Caco-2 (cell line): ENCODE measurements at regions of chr2 and their contacts with region 1.

Region 1: GRCh38 chr2:204260162-204260877 is 285.0 kb upstream of the PARD3B start:
- DNase-seq: peak; percentile 71 to 75
- H3K4me3 ChIP-seq: no peak overlapping the region
- H3K4me3 Mint-ChIP-seq: no peak overlapping the region
- H3K27ac Mint-ChIP-seq: no peak overlapping the region
- H3K4me1 ChIP-seq: peaks cover 9% of the 10 kb centered on the region; the same call in 1 of the 2 replicates
- H3K4me1 Mint-ChIP-seq: peaks cover 26% of the 10 kb centered on the region
- H3K27me3 ChIP-seq: no peaks in the 10 kb centered on the region
- H3K27me3 Mint-ChIP-seq: no peaks in the 10 kb centered on the region
- CTCF ChIP-seq: peak; percentile 81 to 88

Region 2: GRCh38 chr2:204018717-204019116 is 241.6 kb before region 1 on chr2:
- CTCF ChIA-PET with region 1: no interaction called
- POLR2A ChIA-PET with region 1: no interaction called
- intact Hi-C with region 1: no loop called
- DNase-seq: no peak
- H3K4me3 ChIP-seq: no peak overlapping the region
- H3K4me3 Mint-ChIP-seq: no peak overlapping the region
- H3K27ac Mint-ChIP-seq: no peak overlapping the region
- H3K4me1 ChIP-seq: no peaks in the 10 kb centered on the region
- H3K4me1 Mint-ChIP-seq: no peaks in the 10 kb centered on the region
- H3K27me3 ChIP-seq: no peaks in the 10 kb centered on the region
- H3K27me3 Mint-ChIP-seq: peaks cover 9% of the 10 kb centered on the region
- CTCF ChIP-seq: no peak

Region 3: DNA sequence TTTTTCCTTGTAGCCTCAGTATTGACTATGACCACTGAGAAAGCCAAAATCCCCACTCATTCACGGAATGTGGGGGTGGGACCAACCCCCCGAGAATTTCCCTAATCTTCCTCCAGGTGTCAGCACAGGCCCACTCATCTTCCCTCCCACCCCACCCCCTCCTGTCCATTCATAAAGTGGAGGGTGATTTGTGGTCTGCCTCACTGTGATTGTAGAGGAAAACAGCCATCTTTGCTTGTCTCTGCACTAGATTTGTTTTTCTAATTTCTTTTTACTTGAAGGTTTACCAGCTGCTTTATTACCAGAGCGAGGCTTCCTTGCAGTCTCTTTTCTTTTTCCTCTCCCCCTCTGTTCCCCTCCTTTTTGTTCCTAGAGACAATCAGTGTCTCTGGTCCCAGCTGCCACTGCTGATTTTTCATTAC is 152.0 kb before region 1 on chr2:
- CTCF ChIA-PET with region 1: no interaction called
- POLR2A ChIA-PET with region 1: no interaction called
- intact Hi-C with region 1: loop called (anchors 2 kb)
- DNase-seq: peak; percentile 48 to 54
- H3K4me3 ChIP-seq: no peak overlapping the region
- H3K4me3 Mint-ChIP-seq: no peak overlapping the region
- H3K27ac Mint-ChIP-seq: no peak overlapping the region
- H3K4me1 ChIP-seq: no peaks in the 10 kb centered on the region
- H3K4me1 Mint-ChIP-seq: peaks cover 19% of the 10 kb centered on the region
- H3K27me3 ChIP-seq: no peaks in the 10 kb centered on the region; the same call in 1 of the 2 replicates
- H3K27me3 Mint-ChIP-seq: peaks cover 4% of the 10 kb centered on the region
- CTCF ChIP-seq: peak; percentile 78 to 80

Region 4: DNA sequence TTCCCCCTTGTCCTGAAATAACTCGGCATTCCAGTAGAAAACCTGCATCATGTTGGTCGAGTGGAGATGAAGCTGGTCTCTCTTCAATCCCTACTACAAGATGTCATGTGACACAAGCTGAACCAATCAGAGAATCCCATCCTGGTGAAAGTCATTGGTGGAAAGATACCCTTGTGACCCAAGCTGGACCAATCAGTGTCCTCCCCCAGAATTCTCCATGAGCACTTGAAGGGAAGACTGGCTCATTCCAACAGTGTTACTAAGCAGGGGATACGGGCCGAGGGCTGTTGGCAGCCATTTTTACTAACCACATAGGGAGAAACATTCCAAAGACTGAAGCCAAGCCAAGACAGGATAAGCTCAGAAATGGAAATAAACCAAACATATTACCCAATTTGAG is 25.4 kb before region 1 on chr2:
- CTCF ChIA-PET with region 1: no interaction called
- POLR2A ChIA-PET with region 1: no interaction called
- intact Hi-C with region 1: no loop called
- DNase-seq: peak in 1 of 2 experiments; percentile 14
- H3K4me3 ChIP-seq: no peak overlapping the region
- H3K4me3 Mint-ChIP-seq: no peak overlapping the region
- H3K27ac Mint-ChIP-seq: no peak overlapping the region
- H3K4me1 ChIP-seq: no peaks in the 10 kb centered on the region
- H3K4me1 Mint-ChIP-seq: no peaks in the 10 kb centered on the region
- H3K27me3 ChIP-seq: no peaks in the 10 kb centered on the region
- H3K27me3 Mint-ChIP-seq: peaks cover 9% of the 10 kb centered on the region
- CTCF ChIP-seq: no peak

Region 5: GRCh38 chr2:204282525-204282924 is 22.2 kb after region 1 on chr2:
- CTCF ChIA-PET with region 1: interaction called, 7 read pairs
- POLR2A ChIA-PET with region 1: no interaction called
- intact Hi-C with region 1: loop called (anchors 1 kb)
- DNase-seq: peak; percentile 53 to 60
- H3K4me3 ChIP-seq: no peak overlapping the region
- H3K4me3 Mint-ChIP-seq: peak overlapping the region; percentile 26
- H3K27ac Mint-ChIP-seq: no peak overlapping the region
- H3K4me1 ChIP-seq: peaks cover 25% of the 10 kb centered on the region
- H3K4me1 Mint-ChIP-seq: peaks cover 12% of the 10 kb centered on the region
- H3K27me3 ChIP-seq: no peaks in the 10 kb centered on the region
- H3K27me3 Mint-ChIP-seq: no peaks in the 10 kb centered on the region
- CTCF ChIP-seq: no peak

Region 6: GRCh38 chr2:204691911-204692510 is 431.7 kb after region 1 on chr2:
- CTCF ChIA-PET with region 1: interaction called, 5 read pairs
- POLR2A ChIA-PET with region 1: no interaction called
- intact Hi-C with region 1: loop called (anchors 1 kb)
- DNase-seq: peak; percentile 79 to 81
- H3K4me3 ChIP-seq: no peak overlapping the region
- H3K4me3 Mint-ChIP-seq: no peak overlapping the region
- H3K27ac Mint-ChIP-seq: no peak overlapping the region
- H3K4me1 ChIP-seq: peaks cover 20% of the 10 kb centered on the region
- H3K4me1 Mint-ChIP-seq: peaks cover 29% of the 10 kb centered on the region
- H3K27me3 ChIP-seq: no peaks in the 10 kb centered on the region
- H3K27me3 Mint-ChIP-seq: no peaks in the 10 kb centered on the region
- CTCF ChIP-seq: peak; percentile 61 to 92